AG04450 (cell line): ENCODE measurements at regions of chr17 and their contacts with region 1.

Region 1: GRCh38 chr17:60036796-60037612 is 41.7 kb downstream of the HEATR6 start:
- DNase-seq: peak; percentile 37
- H3K4me3 ChIP-seq: no peak overlapping the region
- H3K27ac ChIP-seq: peak overlapping the region; percentile 11
- H3K27me3 ChIP-seq: no peaks in the 10 kb centered on the region
- CTCF ChIP-seq: peak; percentile 97

Region 2: GRCh38 chr17:59746849-59747445 is 290.1 kb before region 1 on chr17:
- CTCF ChIA-PET with region 1: interaction called, 10 read pairs
- POLR2A ChIA-PET with region 1: no interaction called
- DNase-seq: no peak
- H3K4me3 ChIP-seq: no peak overlapping the region
- H3K27ac ChIP-seq: no peak overlapping the region
- H3K27me3 ChIP-seq: no peaks in the 10 kb centered on the region
- CTCF ChIP-seq: peak; percentile 73

Region 3: DNA sequence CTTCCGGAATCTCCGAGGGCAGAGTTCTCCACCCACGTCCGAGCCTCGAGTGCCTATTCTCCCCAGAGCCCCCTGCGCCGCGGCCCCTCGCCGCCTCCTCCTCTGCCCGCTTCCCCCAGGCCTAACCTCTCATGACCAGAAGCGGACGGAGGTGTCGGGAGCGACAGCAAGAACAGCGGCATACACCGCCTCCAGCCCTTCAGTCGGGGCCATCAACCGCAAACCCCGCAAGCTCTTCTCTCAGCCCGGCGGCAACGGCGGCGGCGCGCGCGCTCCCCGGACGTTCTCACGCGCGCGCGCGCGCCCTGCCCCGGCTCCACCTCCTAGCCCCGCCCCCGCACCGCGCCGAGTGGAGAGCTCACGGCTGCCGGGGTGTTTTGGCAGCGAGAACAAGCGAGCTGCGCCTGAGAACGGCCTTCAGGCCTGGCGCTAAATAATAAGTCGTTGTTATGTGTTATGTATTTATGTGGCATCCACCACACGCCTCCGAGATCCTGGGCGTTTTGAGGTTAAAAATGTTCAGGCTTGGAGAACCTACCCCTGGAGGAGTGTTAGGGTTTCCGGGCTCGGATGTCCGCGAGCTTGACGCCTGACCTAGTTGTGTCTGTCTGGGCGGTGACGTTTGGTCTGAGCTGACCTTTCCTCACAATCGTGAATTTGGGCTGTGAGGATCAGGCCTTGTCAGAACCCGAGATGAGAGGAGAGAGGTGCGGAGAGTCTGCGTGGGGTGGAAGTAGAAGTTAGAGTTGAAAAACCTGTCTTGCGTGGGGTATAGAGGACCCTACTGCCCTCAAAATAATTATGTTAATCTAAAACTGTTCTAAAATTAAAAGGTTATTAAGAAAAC is 72.3 kb before region 1 on chr17 and contains the start of gene RNFT1:
- CTCF ChIA-PET with region 1: interaction called, 16 read pairs
- POLR2A ChIA-PET with region 1: no interaction called
- DNase-seq: peak; percentile 32
- H3K4me3 ChIP-seq: peak within 1 kb of the TSS; percentile 85
- H3K27ac ChIP-seq: peak within 1 kb of the TSS; percentile 93
- H3K27me3 ChIP-seq: no peaks in the 10 kb centered on the region
- CTCF ChIP-seq: no peak
- polyA plus RNA-seq, gene RNFT1: 16.4 and 20.8 TPM in 2 replicates

Region 4: GRCh38 chr17:60049936-60050335 is 12.9 kb after region 1 on chr17:
- CTCF ChIA-PET with region 1: interaction called, 50 read pairs
- POLR2A ChIA-PET with region 1: no interaction called
- DNase-seq: no peak
- H3K4me3 ChIP-seq: no peak overlapping the region
- H3K27ac ChIP-seq: no peak overlapping the region
- H3K27me3 ChIP-seq: no peaks in the 10 kb centered on the region
- CTCF ChIP-seq: no peak